ENCODE measurements at regions of chr3 and their contacts with region 1.

Region 1: GRCh38 chr3:41198950-41199865 is at the start of gene CTNNB1:
- DNase-seq: peak; percentile 91
- H3K4me3 ChIP-seq: peak within 1 kb of the TSS; percentile 35 to 90 (median 83)
- H3K27ac ChIP-seq: peak within 1 kb of the TSS; percentile 79
- H3K4me1 ChIP-seq: peaks cover 18% of the 10 kb centered on the region
- H3K27me3 ChIP-seq: peaks cover 2 to 6% of the 10 kb centered on the region in 2 experiments
- CTCF ChIP-seq: no peak
- POLR2A ChIP-seq: peak; percentile 95
- total RNA-seq, gene CTNNB1: 513 and 566 TPM in 2 replicates

Region 2: DNA sequence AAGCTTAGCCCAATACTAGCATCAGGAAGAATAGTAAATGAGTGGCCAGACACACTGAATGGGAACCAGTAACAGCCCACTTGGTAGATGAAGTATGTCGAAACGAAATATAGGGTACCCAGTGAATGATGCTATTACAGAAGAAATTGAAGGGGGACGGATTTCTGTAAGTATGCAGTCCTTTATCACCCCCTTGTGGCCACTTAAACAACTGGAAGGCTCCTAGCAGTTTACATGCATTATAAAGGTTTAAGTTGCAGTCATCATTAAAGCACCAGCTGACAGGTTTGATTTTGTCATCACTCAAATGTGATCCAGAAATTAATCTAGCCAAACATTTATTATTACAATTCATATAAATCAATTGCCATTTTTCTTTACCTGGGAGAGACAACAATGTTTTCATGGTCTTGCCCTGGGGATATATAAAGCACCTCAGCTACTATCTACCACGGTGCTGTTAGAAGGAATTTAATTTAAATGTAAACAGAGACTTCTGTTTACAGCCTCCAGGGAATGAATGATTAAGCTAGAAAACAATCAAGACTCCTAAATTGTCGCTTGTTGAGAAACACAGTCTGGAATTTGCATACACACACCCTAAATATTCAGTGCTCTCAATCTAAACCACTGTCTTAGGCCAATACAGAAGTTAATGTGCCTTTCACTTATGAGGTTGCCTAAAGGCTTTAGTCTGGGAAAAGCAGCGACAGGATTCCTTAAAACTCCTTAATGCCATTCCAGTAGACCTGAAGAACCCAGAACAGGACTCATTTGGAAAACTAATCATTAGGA is 882.0 kb before region 1 on chr3:
- CTCF ChIA-PET with region 1: no interaction called
- POLR2A ChIA-PET with region 1: no interaction called
- dilution Hi-C with region 1: no loop called
- intact Hi-C with region 1: loop called (anchors 10 kb)
- DNase-seq: peak; percentile 64
- H3K4me3 ChIP-seq: no peak overlapping the region
- H3K27ac ChIP-seq: no peak overlapping the region
- H3K4me1 ChIP-seq: no peaks in the 10 kb centered on the region
- H3K27me3 ChIP-seq: no peaks in the 10 kb centered on the region
- CTCF ChIP-seq: peak; percentile 61 to 75
- POLR2A ChIP-seq: no peak

Region 3: DNA sequence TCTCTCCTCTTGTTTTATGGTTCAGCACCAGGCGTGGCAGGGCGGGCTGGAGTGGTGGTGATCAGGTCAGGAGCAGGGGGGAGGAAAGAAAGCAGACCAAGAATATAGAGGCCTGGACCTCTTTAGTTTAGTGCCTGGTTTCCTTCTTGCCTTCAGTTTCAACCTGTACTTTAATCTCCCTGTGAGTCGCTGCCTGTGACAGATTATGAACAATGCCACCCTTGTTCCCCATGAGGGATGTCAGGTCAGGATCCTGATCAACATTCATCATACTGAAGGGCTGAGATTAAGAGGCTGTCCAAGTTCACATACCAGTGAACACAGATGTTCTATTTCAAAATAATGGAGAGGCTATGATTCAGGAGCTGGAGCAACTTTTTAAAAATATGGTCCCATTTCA is 800.9 kb before region 1 on chr3:
- CTCF ChIA-PET with region 1: no interaction called
- POLR2A ChIA-PET with region 1: no interaction called
- dilution Hi-C with region 1: no loop called
- intact Hi-C with region 1: no loop called
- DNase-seq: no peak
- H3K4me3 ChIP-seq: no peak overlapping the region
- H3K27ac ChIP-seq: no peak overlapping the region
- H3K4me1 ChIP-seq: no peaks in the 10 kb centered on the region
- H3K27me3 ChIP-seq: peaks cover 0 to 3% of the 10 kb centered on the region in 2 experiments
- CTCF ChIP-seq: no peak
- POLR2A ChIP-seq: no peak

Region 4: DNA sequence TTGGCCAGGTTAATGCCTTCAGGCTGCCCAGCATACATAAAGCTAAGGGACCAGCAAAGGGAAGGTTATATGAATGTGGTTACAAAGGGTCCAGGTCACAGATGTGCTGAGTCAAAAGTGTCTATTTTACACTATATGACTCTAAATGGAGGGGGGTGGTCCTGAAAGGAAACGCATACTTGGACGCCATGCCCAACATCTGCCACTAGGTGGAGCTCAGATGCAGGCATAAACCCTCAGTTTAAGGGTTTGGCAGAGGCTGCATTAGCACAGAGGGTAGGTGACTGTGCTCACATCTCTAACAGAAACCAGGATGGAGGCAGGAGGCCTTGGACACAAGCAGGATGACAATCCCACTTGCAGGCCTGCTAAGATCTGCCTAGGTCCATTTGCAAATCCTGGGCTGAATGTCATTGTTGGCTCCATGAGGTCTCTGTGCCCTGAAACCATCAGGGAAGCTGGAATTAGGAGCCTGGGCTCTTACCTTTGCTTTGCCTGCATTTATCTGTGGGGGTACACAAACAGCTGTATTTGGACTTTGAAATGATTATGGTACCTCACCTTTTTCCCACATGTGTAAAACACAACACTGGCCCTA is 618.6 kb before region 1 on chr3:
- CTCF ChIA-PET with region 1: interaction called, 5 read pairs
- POLR2A ChIA-PET with region 1: interaction called, 4 read pairs
- dilution Hi-C with region 1: no loop called
- intact Hi-C with region 1: loop called (anchors 1 kb)
- DNase-seq: peak; percentile 72
- H3K4me3 ChIP-seq: no peak overlapping the region
- H3K27ac ChIP-seq: no peak overlapping the region
- H3K4me1 ChIP-seq: no peaks in the 10 kb centered on the region
- H3K27me3 ChIP-seq: peaks cover 0 to 4% of the 10 kb centered on the region in 2 experiments
- CTCF ChIP-seq: peak; percentile 84 to 96
- POLR2A ChIP-seq: no peak

Region 5: GRCh38 chr3:40920041-40920440 is 279.2 kb before region 1 on chr3:
- CTCF ChIA-PET with region 1: interaction called, 4 read pairs
- POLR2A ChIA-PET with region 1: no interaction called
- dilution Hi-C with region 1: no loop called
- intact Hi-C with region 1: loop called (anchors 1 kb)
- DNase-seq: no peak
- H3K4me3 ChIP-seq: no peak overlapping the region
- H3K27ac ChIP-seq: no peak overlapping the region
- H3K4me1 ChIP-seq: peaks cover 4% of the 10 kb centered on the region
- H3K27me3 ChIP-seq: no peaks in the 10 kb centered on the region
- CTCF ChIP-seq: no peak
- POLR2A ChIP-seq: no peak

Region 6: DNA sequence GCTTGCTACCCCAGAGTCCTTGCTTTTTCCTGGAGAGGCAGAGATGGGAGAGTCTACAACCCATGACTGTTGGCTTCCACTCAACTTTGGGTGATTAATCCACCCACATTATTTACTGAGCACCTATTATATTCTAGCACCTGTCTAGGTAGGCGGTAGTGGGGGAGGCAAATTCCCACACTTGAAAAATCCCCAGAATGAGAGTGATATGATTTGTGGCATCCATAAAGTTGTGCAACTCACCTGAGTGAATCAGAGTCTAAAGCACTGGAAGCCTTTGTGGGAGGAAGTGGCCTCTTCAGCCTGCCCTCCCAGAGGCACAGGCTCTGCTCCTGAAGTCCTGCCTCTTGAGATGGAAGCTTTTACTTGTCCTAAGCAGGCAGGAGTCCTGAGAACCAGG is 40.3 kb before region 1 on chr3:
- CTCF ChIA-PET with region 1: no interaction called
- POLR2A ChIA-PET with region 1: interaction called, 4 read pairs
- dilution Hi-C with region 1: no loop called
- intact Hi-C with region 1: loop called (anchors 5 kb)
- DNase-seq: no peak
- H3K4me3 ChIP-seq: no peak overlapping the region
- H3K27ac ChIP-seq: no peak overlapping the region
- H3K4me1 ChIP-seq: peaks cover 5% of the 10 kb centered on the region
- H3K27me3 ChIP-seq: no peaks in the 10 kb centered on the region
- CTCF ChIP-seq: no peak
- POLR2A ChIP-seq: no peak

Region 7: DNA sequence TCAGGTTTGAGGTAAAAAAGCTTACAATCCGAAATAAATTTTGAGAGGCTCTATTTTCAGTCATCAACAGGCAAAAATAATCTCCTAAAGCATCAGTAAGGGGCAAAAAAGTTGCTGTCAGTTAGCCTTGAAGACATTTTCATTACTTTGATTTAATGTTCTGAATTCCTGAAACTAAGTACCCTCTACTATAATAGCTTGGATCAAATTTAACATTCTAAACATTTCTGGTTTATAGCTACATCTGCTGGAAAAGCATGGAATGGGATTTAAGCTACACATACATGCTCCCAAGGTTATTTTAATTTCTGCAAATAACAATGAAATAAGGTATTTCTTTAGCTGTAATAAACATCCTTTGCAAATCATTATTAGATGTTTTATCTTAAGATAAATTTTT is 517.3 kb after region 1 on chr3:
- CTCF ChIA-PET with region 1: no interaction called
- POLR2A ChIA-PET with region 1: no interaction called
- dilution Hi-C with region 1: no loop called
- intact Hi-C with region 1: loop called (anchors 5 kb)
- DNase-seq: peak; percentile 55
- H3K4me3 ChIP-seq: no peak overlapping the region
- H3K27ac ChIP-seq: no peak overlapping the region
- H3K4me1 ChIP-seq: peaks cover under 1% of the 10 kb centered on the region
- H3K27me3 ChIP-seq: no peaks in the 10 kb centered on the region
- CTCF ChIP-seq: peak in 1 of 2 donors; percentile 16
- POLR2A ChIP-seq: no peak

Region 8: GRCh38 chr3:42473083-42473932 is 1274.1 kb after region 1 on chr3:
- CTCF ChIA-PET with region 1: no interaction called
- POLR2A ChIA-PET with region 1: no interaction called
- dilution Hi-C with region 1: no loop called
- intact Hi-C with region 1: loop called (anchors 5 kb)
- DNase-seq: peak; percentile 92
- H3K4me3 ChIP-seq: peak overlapping the region in 1 of 3 experiments; percentile 2
- H3K27ac ChIP-seq: peak overlapping the region; percentile 89
- H3K4me1 ChIP-seq: peaks cover 32% of the 10 kb centered on the region
- H3K27me3 ChIP-seq: no peaks in the 10 kb centered on the region
- CTCF ChIP-seq: no peak
- POLR2A ChIP-seq: no peak

Measured in endothelial cell of umbilical vein (primary cell).